ENCODE measurements at regions of chr1 and their contacts with region 1.

Region 1: DNA sequence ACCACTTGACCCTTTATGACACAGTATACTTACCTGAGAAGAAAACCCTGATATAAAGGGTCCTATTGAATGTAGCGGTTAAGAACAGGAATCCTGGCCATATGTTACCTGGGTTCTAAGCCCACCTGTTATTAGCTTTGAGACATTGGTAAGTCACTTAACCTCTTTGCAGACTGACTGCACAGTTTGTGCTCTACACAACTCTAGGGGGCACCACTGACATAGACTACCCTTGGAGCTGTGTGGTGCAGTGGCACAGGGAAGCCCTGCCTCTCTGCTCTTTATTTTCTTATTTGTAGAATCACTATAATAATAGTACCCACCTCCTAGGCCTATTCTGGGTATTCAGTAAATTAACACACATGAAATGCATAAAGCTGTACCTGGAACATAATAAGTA is 165.6 kb downstream of the C1orf94 start:
- DNase-seq: no peak
- H3K4me3 ChIP-seq: no peak overlapping the region
- H3K27ac ChIP-seq: no peak overlapping the region
- H3K4me1 ChIP-seq: no peaks in the 10 kb centered on the region
- H3K27me3 ChIP-seq: peaks cover 0 to 4% (median 0%) of the 10 kb centered on the region in 4 experiments; a peak in 2 of 7 replicates
- CTCF ChIP-seq: peak; percentile 27 to 38 (median 38); a peak in 3 of 4 replicates
- EP300 ChIP-seq: no peak
- POLR2A ChIP-seq: no peak
- RAD21 ChIP-seq: peak; percentile 47 to 65

Region 2: GRCh38 chr1:34292472-34292871 is 49.9 kb before region 1 on chr1:
- CTCF ChIA-PET with region 1: no interaction called
- POLR2A ChIA-PET with region 1: no interaction called
- DNase-seq: no peak
- H3K4me3 ChIP-seq: no peak overlapping the region
- H3K27ac ChIP-seq: no peak overlapping the region
- H3K4me1 ChIP-seq: no peaks in the 10 kb centered on the region
- H3K27me3 ChIP-seq: no peaks in the 10 kb centered on the region; a peak in 2 of 7 replicates
- CTCF ChIP-seq: peak in 2 of 3 experiments; percentile 38 to 57; a peak in 3 of 4 replicates
- EP300 ChIP-seq: no peak
- POLR2A ChIP-seq: no peak
- RAD21 ChIP-seq: peak; percentile 52 to 66

Region 3: GRCh38 chr1:34328281-34328799 is 14.0 kb before region 1 on chr1:
- CTCF ChIA-PET with region 1: interaction called, 32 read pairs
- POLR2A ChIA-PET with region 1: interaction called, 3 read pairs
- DNase-seq: no peak
- H3K4me3 ChIP-seq: no peak overlapping the region
- H3K27ac ChIP-seq: no peak overlapping the region
- H3K4me1 ChIP-seq: no peaks in the 10 kb centered on the region; a peak in 1 of 7 replicates
- H3K27me3 ChIP-seq: no peaks in the 10 kb centered on the region
- CTCF ChIP-seq: no peak
- EP300 ChIP-seq: no peak
- POLR2A ChIP-seq: no peak
- RAD21 ChIP-seq: no peak